OCI-LY7 (cell line): ENCODE measurements at regions of chr12 and their contacts with region 1.

Region 1: GRCh38 chr12:47164724-47165439 is 85.1 kb upstream of the AMIGO2 start:
- DNase-seq: no peak
- H3K4me3 ChIP-seq: no peak overlapping the region
- H3K27ac ChIP-seq: no peak overlapping the region
- H3K4me1 ChIP-seq: no peaks in the 10 kb centered on the region
- CTCF ChIP-seq: 0 out of 2 replicates have a peak, but pooled peaks have one; percentile 29

Region 2: GRCh38 chr12:47149146-47149545 is 15.7 kb before region 1 on chr12:
- CTCF ChIA-PET with region 1: no interaction called
- POLR2A ChIA-PET with region 1: interaction called, 10 read pairs
- intact Hi-C with region 1: no loop called
- DNase-seq: no peak
- H3K4me3 ChIP-seq: no peak overlapping the region
- H3K27ac ChIP-seq: no peak overlapping the region
- H3K4me1 ChIP-seq: no peaks in the 10 kb centered on the region
- CTCF ChIP-seq: no peak